Right lobe of liver (tissue), 6 donors: ENCODE measurements at regions of chr1 and their contacts with region 1.

Region 1: DNA sequence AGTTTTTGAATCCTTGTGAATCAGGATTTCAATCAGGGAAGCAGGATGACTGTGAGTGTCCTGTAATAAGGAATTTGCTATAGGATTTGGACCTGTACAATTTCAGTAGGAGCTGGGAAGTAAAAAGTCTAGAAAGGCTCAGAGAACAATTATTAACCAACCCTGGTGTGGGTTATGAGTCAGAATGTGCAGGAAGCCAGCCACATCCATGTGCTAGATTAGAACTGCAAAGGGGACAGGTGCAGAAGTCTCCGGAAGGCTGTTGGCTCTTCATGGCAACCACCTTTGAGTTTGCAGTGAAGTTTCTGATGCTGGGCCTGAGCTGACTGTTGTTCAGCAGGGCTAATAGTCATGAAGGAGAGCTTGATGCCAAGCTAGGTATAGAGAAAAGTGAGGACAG is 70.7 kb downstream of the SPATA46 start:
- DNase-seq: peak in 1 of 3 donors; percentile 33
- ATAC-seq: peak; percentile 66 to 97 (median 80)
- H3K4me3 ChIP-seq: no peak overlapping the region
- H3K27ac ChIP-seq: no peak overlapping the region
- H3K4me1 ChIP-seq: peaks cover 0 to 16% (median 5%) of the 10 kb centered on the region in 4 donors
- H3K27me3 ChIP-seq: no peaks in the 10 kb centered on the region
- CTCF ChIP-seq: no peak
- POLR2A ChIP-seq: no peak

Region 2: DNA sequence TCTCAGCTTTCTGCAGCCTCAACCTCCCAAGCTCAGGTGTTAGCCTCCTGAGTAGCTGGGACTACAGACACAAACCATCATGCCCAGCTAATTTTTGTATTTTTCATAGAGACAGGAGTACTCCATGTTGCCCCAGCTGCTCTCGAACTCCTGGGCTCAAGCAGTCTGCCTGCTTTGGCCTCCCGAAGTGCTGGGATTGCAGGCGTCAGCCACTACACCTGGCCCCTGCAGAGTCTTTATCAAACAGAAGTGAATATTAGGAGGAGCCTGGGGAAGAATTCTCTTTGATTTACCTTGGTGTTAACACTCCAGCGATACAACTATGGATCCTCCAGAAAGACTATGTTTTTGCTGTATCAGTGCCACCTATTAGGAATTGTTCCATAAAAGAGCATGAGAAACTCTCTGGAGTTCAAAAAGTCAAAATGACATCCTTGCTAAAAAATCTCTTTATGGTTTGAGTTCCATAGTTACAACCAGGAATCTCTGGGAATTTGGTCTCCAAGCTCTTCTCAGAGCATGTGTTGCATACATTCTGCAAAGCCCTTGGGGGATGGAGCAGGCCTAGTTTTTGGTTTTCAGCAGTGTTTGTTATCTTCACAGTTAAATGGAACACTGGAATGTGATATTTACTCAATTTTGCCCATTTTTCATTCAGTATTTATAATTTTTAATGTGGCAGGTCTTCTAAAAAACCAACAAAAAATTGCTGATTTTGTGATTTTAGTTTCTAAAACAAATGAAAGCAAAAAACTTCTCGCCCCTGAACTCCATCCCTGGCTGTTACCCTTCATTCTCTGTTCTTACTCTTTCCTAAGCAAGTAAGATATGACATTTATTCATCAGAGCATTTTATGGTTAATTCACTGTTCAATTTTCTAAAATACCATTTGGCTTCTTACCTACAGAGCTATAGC is 359.6 kb before region 1 on chr1:
- intact Hi-C with region 1: loop called in 1 of 2 experiments (anchors 10 kb)
- DNase-seq: no peak
- ATAC-seq: no peak
- H3K4me3 ChIP-seq: no peak overlapping the region
- H3K27ac ChIP-seq: no peak overlapping the region
- H3K4me1 ChIP-seq: no peaks in the 10 kb centered on the region
- H3K27me3 ChIP-seq: no peaks in the 10 kb centered on the region
- CTCF ChIP-seq: no peak
- POLR2A ChIP-seq: no peak